ENCODE measurements at regions of chr1 and their contacts with region 1.

Region 1: GRCh38 chr1:198088360-198089071 is 68.3 kb upstream of the NEK7 start:
- DNase-seq: peak; percentile 64
- H3K4me3 Mint-ChIP-seq: no peak overlapping the region
- H3K27ac Mint-ChIP-seq: no peak overlapping the region
- H3K4me1 Mint-ChIP-seq: peaks cover 7% of the 10 kb centered on the region
- H3K27me3 Mint-ChIP-seq: no peaks in the 10 kb centered on the region
- CTCF ChIP-seq: peak; percentile 71

Region 2: GRCh38 chr1:198072177-198072576 is 16.3 kb before region 1 on chr1:
- CTCF ChIA-PET with region 1: interaction called, 10 read pairs
- POLR2A ChIA-PET with region 1: no interaction called
- intact Hi-C with region 1: no loop called
- DNase-seq: peak; percentile 14
- H3K4me3 Mint-ChIP-seq: no peak overlapping the region
- H3K27ac Mint-ChIP-seq: no peak overlapping the region
- H3K4me1 Mint-ChIP-seq: no peaks in the 10 kb centered on the region
- H3K27me3 Mint-ChIP-seq: no peaks in the 10 kb centered on the region
- CTCF ChIP-seq: no peak

Region 3: GRCh38 chr1:198253668-198254067 is 165.2 kb after region 1 on chr1:
- CTCF ChIA-PET with region 1: no interaction called
- POLR2A ChIA-PET with region 1: no interaction called
- intact Hi-C with region 1: loop called (anchors 5 kb)
- DNase-seq: peak; percentile 46
- H3K4me3 Mint-ChIP-seq: peak overlapping the region; percentile 2
- H3K27ac Mint-ChIP-seq: peak overlapping the region; percentile 77
- H3K4me1 Mint-ChIP-seq: peaks cover 16% of the 10 kb centered on the region
- H3K27me3 Mint-ChIP-seq: no peaks in the 10 kb centered on the region
- CTCF ChIP-seq: no peak

Region 4: DNA sequence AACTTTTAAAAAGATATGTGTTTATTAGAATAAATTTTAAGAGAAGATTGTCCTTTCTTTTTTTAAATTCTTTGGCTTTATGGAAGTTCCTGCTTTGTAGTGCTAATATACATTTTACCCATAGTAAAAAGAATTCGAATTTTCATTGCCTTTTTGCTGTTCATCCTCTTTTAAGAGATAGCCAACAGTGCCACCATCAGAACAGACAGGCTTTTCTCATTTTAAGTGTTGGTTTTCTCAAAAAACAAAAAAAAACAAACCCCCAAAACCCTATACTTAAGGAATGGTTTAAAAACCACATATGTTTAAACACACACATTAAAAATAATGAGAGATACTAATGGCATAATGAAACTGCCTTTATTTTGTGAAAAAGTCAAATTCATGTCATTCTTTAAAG is 187.1 kb after region 1 on chr1:
- CTCF ChIA-PET with region 1: interaction called, 7 read pairs
- POLR2A ChIA-PET with region 1: no interaction called
- intact Hi-C with region 1: loop called (anchors 1 kb)
- DNase-seq: no peak
- H3K4me3 Mint-ChIP-seq: no peak overlapping the region
- H3K27ac Mint-ChIP-seq: no peak overlapping the region
- H3K4me1 Mint-ChIP-seq: peaks cover 5% of the 10 kb centered on the region
- H3K27me3 Mint-ChIP-seq: no peaks in the 10 kb centered on the region
- CTCF ChIP-seq: no peak

Region 5: GRCh38 chr1:198359024-198359653 is 270.6 kb after region 1 on chr1:
- CTCF ChIA-PET with region 1: interaction called, 5 read pairs
- POLR2A ChIA-PET with region 1: no interaction called
- intact Hi-C with region 1: loop called (anchors 1 kb)
- DNase-seq: peak; percentile 62
- H3K4me3 Mint-ChIP-seq: no peak overlapping the region
- H3K27ac Mint-ChIP-seq: no peak overlapping the region
- H3K4me1 Mint-ChIP-seq: peaks cover 10% of the 10 kb centered on the region
- H3K27me3 Mint-ChIP-seq: no peaks in the 10 kb centered on the region
- CTCF ChIP-seq: peak; percentile 75